Activated CD4-positive, alpha-beta memory T cell treated with anti-CD3 and anti-CD28 coated beads, Interleukin-2, amount 10 ng/mL, durations not matched to agents 7 days and 5 days (primary cell): ENCODE measurements at regions of chr5 and their contacts with region 1.

Region 1: GRCh38 chr5:113612060-113612496 is 98.6 kb downstream of the YTHDC2 start:
- DNase-seq: no peak
- H3K4me3 Mint-ChIP-seq: no peak overlapping the region
- H3K27ac Mint-ChIP-seq: no peak overlapping the region
- H3K4me1 Mint-ChIP-seq: peaks cover 15% of the 10 kb centered on the region
- H3K27me3 Mint-ChIP-seq: peaks cover 20% of the 10 kb centered on the region

Region 2: GRCh38 chr5:113598926-113599325 is 13.2 kb before region 1 on chr5:
- CTCF ChIA-PET with region 1: interaction called, 12 read pairs
- POLR2A ChIA-PET with region 1: no interaction called
- DNase-seq: no peak
- H3K4me3 Mint-ChIP-seq: no peak overlapping the region
- H3K27ac Mint-ChIP-seq: no peak overlapping the region
- H3K4me1 Mint-ChIP-seq: no peaks in the 10 kb centered on the region
- H3K27me3 Mint-ChIP-seq: peaks cover 9% of the 10 kb centered on the region

Region 3: DNA sequence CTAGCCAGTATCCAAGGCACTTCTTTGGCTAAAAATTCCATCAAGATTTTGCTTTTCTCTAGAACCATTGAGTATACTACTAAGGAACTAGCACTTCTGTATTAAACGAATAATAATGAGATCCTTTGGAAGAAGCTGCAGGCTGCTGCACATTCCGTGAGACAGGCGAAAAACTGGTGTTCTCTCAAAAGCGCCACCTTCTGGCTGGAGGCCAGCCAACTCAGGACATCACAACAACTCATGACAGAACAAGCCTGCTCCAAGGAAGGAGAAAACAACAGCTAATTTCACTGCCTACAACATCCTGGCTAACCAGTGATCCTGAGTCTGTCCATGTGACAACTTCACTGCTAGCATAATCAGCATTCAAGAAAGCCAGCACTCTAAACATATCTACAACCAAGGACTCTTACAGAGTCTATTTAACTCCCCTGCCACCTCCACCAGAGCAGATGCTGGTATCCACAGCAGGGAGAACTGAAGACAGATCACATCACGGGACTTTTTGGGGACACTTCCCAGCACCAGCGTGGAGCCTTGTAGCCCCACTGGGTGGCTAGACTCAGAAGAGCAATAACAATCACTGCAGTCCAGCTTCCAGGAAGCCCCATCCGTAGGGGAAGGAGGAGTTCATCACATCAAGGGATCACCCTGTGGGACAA is 51.9 kb after region 1 on chr5:
- CTCF ChIA-PET with region 1: interaction called, 46 read pairs
- POLR2A ChIA-PET with region 1: no interaction called
- DNase-seq: peak; percentile 40
- H3K4me3 Mint-ChIP-seq: no peak overlapping the region
- H3K27ac Mint-ChIP-seq: no peak overlapping the region
- H3K4me1 Mint-ChIP-seq: no peaks in the 10 kb centered on the region
- H3K27me3 Mint-ChIP-seq: peaks cover 28% of the 10 kb centered on the region

Region 4: DNA sequence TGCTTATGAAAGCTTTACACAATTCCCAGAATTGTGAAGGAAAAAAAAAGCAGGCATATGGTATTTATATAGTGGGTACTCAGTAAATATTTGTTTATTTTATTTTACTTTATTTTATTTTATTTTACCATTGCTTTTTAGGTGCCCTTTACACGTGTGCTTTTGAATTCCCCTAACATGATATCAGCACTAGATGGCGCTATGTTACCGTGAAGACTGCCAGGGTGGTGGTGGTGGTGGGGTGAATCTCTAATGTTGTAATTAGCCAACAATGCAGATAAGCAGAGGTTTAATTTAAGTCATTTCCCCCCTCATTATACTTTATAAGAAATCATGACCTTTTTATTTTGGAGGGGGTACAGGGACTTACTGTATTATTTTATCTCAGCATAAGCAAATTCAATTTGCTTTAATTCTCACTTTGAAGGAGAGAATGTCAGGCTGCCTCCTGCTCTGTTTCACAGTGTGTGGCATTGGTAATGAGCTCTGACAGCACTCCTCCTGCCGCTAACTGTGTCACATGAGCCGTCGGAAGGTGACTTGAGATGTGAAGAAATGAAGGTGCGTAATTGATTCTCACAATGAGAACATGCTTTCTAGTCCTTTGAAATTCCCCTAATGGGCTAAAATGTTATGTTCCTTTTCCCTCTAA is 67.0 kb after region 1 on chr5:
- CTCF ChIA-PET with region 1: interaction called, 11 read pairs
- POLR2A ChIA-PET with region 1: no interaction called
- DNase-seq: peak; percentile 23
- H3K4me3 Mint-ChIP-seq: no peak overlapping the region
- H3K27ac Mint-ChIP-seq: no peak overlapping the region
- H3K4me1 Mint-ChIP-seq: no peaks in the 10 kb centered on the region
- H3K27me3 Mint-ChIP-seq: no peaks in the 10 kb centered on the region

Region 5: GRCh38 chr5:113788141-113788655 is 176.1 kb after region 1 on chr5:
- CTCF ChIA-PET with region 1: no interaction called
- POLR2A ChIA-PET with region 1: no interaction called
- DNase-seq: no peak
- H3K4me3 Mint-ChIP-seq: no peak overlapping the region
- H3K27ac Mint-ChIP-seq: no peak overlapping the region
- H3K4me1 Mint-ChIP-seq: no peaks in the 10 kb centered on the region
- H3K27me3 Mint-ChIP-seq: no peaks in the 10 kb centered on the region

Region 6: DNA sequence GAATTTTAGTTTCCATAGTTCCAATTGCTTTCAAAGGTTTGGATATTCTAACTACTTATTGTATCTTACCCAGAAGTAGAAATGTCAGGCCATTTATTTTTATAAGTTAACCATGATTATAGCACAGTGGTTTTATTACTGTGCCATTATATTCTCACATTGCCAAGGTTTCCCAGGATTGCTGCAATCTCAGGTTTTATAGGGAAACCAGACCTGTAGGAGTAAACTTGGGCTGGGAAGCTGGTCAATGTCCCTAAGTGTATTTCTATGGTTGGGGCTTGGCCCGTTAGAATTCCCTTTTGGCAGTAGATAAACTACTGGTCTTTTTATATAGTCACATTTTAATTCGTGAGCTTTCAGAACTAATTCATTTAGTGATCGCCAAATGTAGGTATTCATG is 353.1 kb after region 1 on chr5:
- CTCF ChIA-PET with region 1: no interaction called
- POLR2A ChIA-PET with region 1: no interaction called
- DNase-seq: no peak
- H3K4me3 Mint-ChIP-seq: no peak overlapping the region
- H3K27ac Mint-ChIP-seq: no peak overlapping the region
- H3K4me1 Mint-ChIP-seq: no peaks in the 10 kb centered on the region
- H3K27me3 Mint-ChIP-seq: no peaks in the 10 kb centered on the region

Region 7: GRCh38 chr5:114449860-114450421 is 837.9 kb after region 1 on chr5:
- CTCF ChIA-PET with region 1: interaction called, 23 read pairs
- POLR2A ChIA-PET with region 1: no interaction called
- DNase-seq: peak; percentile 34
- H3K4me3 Mint-ChIP-seq: no peak overlapping the region
- H3K27ac Mint-ChIP-seq: no peak overlapping the region
- H3K4me1 Mint-ChIP-seq: no peaks in the 10 kb centered on the region
- H3K27me3 Mint-ChIP-seq: peaks cover 2% of the 10 kb centered on the region